Breast epithelium (tissue), 4 donors: ENCODE measurements at regions of chr18 and their contacts with region 1.

Region 1: GRCh38 chr18:49074505-49074904 is 123.7 kb upstream of the SMAD7 start:
- DNase-seq: no peak
- H3K4me3 ChIP-seq: no peak overlapping the region
- H3K27ac ChIP-seq: peak overlapping the region in 1 of 2 donors; percentile 40
- H3K4me1 ChIP-seq: no peaks in the 10 kb centered on the region
- H3K27me3 ChIP-seq: no peaks in the 10 kb centered on the region
- CTCF ChIP-seq: no peak
- POLR2A ChIP-seq: no peak

Region 2: GRCh38 chr18:48963586-48964480 is 110.7 kb before region 1 on chr18:
- intact Hi-C with region 1: no loop called
- DNase-seq: no peak
- H3K4me3 ChIP-seq: no peak overlapping the region
- H3K27ac ChIP-seq: no peak overlapping the region
- H3K4me1 ChIP-seq: no peaks in the 10 kb centered on the region
- H3K27me3 ChIP-seq: no peaks in the 10 kb centered on the region
- CTCF ChIP-seq: no peak
- POLR2A ChIP-seq: no peak

Region 3: DNA sequence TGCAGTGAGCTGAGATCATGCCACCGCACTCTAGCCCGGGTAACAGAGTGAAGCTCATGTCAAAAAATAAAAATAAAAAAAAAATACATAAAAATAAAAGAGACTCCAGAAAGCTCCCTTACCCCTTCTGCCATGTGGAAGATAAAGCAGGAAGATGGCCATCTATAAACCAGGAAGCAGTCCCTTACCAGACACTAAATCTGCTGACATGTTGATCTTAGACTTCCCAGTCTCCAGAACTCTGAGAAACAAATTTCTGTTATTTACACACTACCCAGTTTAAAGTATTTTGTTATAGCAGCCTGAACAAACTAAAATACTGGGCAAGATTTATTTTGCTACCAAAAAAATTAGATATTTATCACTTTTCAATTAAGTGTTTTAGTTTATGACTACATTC is 12.4 kb after region 1 on chr18:
- intact Hi-C with region 1: loop called (anchors 1 kb)
- DNase-seq: no peak
- H3K4me3 ChIP-seq: no peak overlapping the region
- H3K27ac ChIP-seq: no peak overlapping the region
- H3K4me1 ChIP-seq: no peaks in the 10 kb centered on the region
- H3K27me3 ChIP-seq: no peaks in the 10 kb centered on the region
- CTCF ChIP-seq: no peak
- POLR2A ChIP-seq: no peak

Region 4: GRCh38 chr18:50982802-50983179 is 1908.3 kb after region 1 on chr18:
- intact Hi-C with region 1: no loop called
- DNase-seq: no peak
- H3K4me3 ChIP-seq: no peak overlapping the region
- H3K27ac ChIP-seq: peak overlapping the region; percentile 60 to 64
- H3K4me1 ChIP-seq: no peaks in the 10 kb centered on the region
- H3K27me3 ChIP-seq: no peaks in the 10 kb centered on the region
- CTCF ChIP-seq: no peak
- POLR2A ChIP-seq: no peak